Activated CD4-positive, alpha-beta T cell treated with anti-CD3 and anti-CD28 coated beads for 36 hours (primary cell): ENCODE measurements at regions of chrX and their contacts with region 1.

Region 1: DNA sequence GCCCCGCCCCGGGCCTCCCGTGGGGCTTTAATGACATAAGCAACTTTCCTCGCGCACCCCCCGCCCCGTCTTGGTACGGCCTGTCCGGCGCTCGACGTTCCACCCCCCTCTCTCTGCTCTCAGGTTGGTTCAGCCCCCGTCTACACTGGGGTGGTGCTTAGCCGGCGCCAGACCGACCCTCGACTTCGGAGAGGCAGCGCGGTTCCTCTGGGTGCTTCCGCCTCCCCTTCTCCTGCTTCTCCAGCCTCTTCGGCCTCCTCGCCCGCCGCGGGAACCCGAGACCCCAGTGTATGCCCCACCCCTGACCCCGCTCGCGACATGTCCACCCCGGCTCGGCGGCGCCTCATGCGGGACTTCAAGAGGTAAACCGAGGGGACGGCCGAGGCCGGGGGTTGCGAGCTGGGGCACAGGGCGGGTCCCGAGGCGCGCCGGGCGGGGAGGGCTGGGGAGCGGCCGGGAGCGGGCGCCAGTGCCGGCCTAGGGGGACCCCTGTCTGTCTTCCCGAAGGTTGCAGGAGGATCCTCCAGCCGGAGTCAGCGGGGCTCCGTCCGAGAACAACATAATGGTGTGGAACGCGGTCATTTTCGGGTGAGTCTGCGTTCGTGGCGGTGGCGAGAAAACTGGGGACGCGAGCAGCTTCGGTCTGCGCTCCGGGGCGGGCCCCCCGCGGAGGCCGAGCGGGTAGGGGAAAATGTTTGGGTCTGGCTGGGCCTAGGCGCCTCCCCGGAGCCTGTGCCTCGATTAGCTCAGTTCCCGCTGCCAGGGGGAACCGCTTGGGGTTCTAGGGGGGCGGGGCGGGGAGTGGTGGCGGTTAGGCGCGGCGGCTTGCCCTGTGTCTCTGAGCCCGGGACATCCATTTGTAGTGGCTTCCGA is at the start of gene UBE2A:
- DNase-seq: peak; percentile 92
- ATAC-seq: peak; percentile 92
- H3K4me3 Mint-ChIP-seq: peak within 1 kb of the TSS; percentile 94
- H3K27ac Mint-ChIP-seq: peak within 1 kb of the TSS; percentile 87
- H3K4me1 Mint-ChIP-seq: peaks cover 24% of the 10 kb centered on the region
- H3K27me3 Mint-ChIP-seq: no peaks in the 10 kb centered on the region
- total RNA-seq, gene UBE2A: 49.2 to 67.9 TPM

Region 2: DNA sequence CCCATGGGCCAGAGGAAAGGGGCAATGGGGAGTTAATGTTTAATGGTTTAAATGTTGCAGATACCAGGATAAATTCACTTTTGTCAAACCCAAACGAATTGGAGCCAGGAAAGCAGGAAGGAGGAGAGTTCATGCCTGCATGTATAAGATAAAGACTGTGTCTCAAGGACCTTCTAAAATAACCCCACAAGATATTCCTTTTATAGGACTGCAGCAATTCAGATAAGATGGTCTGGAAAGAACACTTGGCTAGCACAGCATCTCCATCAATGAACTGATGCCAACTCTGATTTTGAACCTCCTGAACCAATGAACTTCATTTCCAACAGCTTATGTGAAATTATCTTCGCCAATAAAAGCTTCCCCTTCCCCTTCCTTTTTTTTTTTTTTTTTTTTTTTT is 631.5 kb before region 1 on chrX:
- CTCF ChIA-PET with region 1: no interaction called
- POLR2A ChIA-PET with region 1: no interaction called
- intact Hi-C with region 1: no loop called
- DNase-seq: no peak
- ATAC-seq: no peak
- H3K4me3 Mint-ChIP-seq: no peak overlapping the region
- H3K27ac Mint-ChIP-seq: no peak overlapping the region
- H3K4me1 Mint-ChIP-seq: no peaks in the 10 kb centered on the region
- H3K27me3 Mint-ChIP-seq: peaks cover 2% of the 10 kb centered on the region

Region 3: DNA sequence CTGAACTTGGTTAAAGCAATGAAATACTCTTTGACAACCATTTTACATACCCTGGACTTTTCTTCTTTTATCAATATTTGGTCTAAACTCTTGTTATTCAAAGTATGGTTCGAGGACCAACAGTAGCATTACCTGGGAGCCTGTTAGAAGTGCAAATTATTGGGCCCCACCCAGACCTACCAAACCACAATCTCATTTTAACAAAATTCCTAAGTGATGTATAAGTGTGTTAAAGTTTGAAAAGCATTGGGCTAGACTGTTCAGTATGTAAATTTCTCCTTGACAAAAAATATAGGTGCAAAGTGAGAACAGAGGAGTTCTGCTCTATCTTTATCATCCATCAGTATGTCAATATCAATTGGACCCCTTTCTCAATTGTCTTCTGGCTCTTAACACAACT is 271.5 kb before region 1 on chrX:
- CTCF ChIA-PET with region 1: no interaction called
- POLR2A ChIA-PET with region 1: no interaction called
- intact Hi-C with region 1: no loop called
- DNase-seq: no peak
- ATAC-seq: no peak
- H3K4me3 Mint-ChIP-seq: no peak overlapping the region
- H3K27ac Mint-ChIP-seq: no peak overlapping the region
- H3K4me1 Mint-ChIP-seq: peaks cover 2% of the 10 kb centered on the region
- H3K27me3 Mint-ChIP-seq: peaks cover 2% of the 10 kb centered on the region

Region 4: DNA sequence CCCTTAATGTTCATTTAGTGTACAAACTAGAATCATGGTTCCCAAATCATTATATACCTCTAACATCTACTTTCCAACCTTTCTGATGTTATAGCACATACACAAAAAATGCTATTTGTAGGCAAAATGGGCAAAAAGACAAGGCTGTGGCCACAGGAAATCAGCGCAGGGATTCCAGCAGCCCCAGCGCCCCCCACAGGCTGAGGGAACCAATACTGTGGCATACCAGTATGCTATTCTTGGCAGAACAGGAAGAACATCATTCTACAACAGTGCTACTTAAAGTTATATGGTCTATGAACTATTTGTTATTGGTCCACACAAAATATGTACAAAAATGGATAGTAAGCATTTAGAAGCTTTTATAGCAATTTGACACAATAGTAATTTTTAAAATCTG is 34.8 kb before region 1 on chrX:
- CTCF ChIA-PET with region 1: no interaction called
- POLR2A ChIA-PET with region 1: no interaction called
- intact Hi-C with region 1: loop called in 1 of 2 experiments (anchors 1 kb)
- DNase-seq: peak; percentile 26
- ATAC-seq: no peak
- H3K4me3 Mint-ChIP-seq: no peak overlapping the region
- H3K27ac Mint-ChIP-seq: no peak overlapping the region
- H3K4me1 Mint-ChIP-seq: no peaks in the 10 kb centered on the region
- H3K27me3 Mint-ChIP-seq: no peaks in the 10 kb centered on the region

Region 5: DNA sequence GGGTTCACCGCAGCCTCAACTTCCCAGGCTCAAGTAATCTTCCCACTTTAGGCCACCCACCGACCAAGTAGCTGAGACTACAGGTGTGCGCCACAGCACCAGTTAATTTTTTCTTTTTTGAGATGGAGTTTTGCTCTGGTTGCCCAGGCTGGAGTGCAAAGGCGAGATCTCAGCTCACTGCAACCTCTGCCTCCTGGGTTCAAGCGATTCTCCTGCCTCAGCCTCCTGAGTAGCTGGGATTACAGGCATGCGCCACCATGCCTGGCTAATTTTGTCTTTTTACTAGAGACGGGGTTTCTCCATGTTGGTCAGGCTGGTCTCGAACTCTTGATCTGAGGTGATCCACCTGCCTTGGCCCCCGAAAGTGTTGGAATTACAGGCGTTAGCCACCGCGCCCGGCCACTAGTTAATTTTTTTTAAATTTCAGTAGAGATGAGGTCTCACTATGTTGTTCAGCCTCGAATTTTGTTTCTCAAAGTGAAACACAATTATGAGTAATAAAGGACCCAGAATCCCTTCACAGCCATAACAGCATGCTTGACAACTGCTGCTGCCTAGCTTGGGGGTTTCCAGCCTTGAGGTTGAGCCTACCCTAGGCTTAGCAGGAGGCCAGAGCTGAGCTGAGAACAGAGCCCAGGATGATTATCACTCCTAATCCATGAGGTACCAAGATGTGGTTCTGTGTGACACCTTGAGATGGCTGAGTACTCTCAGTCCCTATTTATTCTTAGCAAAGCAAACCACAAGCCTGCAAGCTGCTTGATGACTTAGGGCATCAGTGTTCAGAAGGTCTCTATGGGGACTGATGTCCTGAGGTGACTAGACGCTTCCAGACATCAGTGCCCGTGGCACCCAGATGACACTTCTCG is 73.2 kb after region 1 on chrX:
- CTCF ChIA-PET with region 1: no interaction called
- POLR2A ChIA-PET with region 1: no interaction called
- intact Hi-C with region 1: loop called in 1 of 2 experiments (anchors 1 kb)
- DNase-seq: peak; percentile 81
- ATAC-seq: peak; percentile 96
- H3K4me3 Mint-ChIP-seq: peak overlapping the region; percentile 32
- H3K27ac Mint-ChIP-seq: peak overlapping the region; percentile 91
- H3K4me1 Mint-ChIP-seq: peaks cover 36% of the 10 kb centered on the region
- H3K27me3 Mint-ChIP-seq: no peaks in the 10 kb centered on the region